ENCODE measurements at regions of chr6 and their contacts with region 1.

Region 1: DNA sequence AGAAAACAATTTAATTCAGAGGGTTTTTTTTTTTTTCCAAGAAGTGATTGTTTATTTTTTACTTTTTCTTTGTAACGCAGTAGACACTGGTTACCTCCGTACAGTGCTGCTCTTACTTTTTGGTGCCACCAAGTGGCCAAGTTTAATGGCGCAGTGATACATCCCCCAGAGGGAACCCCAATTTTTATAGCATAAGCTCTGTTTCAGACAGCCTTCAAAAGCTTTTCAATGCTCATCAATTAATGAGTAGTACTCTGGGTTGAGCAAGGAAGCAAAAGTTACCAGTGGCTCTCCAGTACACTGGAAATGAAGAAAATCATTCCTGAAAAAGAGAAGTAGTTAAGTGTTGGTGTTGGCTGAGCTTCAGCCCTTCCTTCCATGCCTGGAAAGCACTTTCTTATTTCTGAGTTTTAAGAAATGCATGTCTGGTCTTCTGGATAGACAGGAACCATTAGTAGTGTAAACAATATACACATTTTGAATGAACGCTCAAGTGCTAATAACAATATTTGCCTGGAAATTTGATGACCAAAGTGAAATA is 129.1 kb upstream of the SMLR1 start:
- DNase-seq: no peak
- ATAC-seq: peak; percentile 64
- H3K4me3 Mint-ChIP-seq: no peak overlapping the region
- H3K27ac Mint-ChIP-seq: no peak overlapping the region
- H3K4me1 Mint-ChIP-seq: no peaks in the 10 kb centered on the region
- H3K27me3 Mint-ChIP-seq: peaks cover 8% of the 10 kb centered on the region
- CTCF ChIP-seq: no peak

Region 2: DNA sequence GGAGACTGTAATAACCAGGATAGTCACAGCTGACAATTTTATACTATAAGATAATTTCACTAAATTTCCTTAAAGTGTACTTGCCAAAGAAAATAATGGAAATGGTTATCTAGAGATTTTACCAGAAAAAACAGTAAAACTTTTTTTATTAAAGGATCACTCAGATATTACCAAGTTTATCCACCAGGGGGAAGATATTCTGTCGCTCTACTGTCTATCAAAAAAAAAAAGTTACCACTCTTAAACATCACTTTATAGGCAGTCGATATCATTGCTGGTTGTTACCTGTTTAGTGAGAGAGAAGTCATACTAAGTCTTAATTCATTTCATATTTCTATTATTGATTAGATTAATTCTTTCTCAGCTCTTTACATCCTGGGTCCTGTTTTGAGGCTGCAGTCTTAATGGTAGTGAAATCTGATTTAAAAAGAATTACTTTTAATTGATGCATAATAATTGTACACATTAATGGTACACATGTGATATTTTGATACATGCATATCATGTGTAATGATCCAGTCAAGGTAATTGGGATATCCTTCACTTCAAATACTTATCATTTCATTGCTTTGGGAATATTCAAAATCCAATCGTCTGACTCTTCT is 660.8 kb before region 1 on chr6:
- CTCF ChIA-PET with region 1: interaction called, 3 read pairs
- POLR2A ChIA-PET with region 1: no interaction called
- intact Hi-C with region 1: loop called (anchors 2 kb)
- DNase-seq: no peak
- ATAC-seq: peak; percentile 49
- H3K4me3 Mint-ChIP-seq: no peak overlapping the region
- H3K27ac Mint-ChIP-seq: no peak overlapping the region
- H3K4me1 Mint-ChIP-seq: peaks cover 68% of the 10 kb centered on the region
- H3K27me3 Mint-ChIP-seq: no peaks in the 10 kb centered on the region
- CTCF ChIP-seq: no peak

Region 3: GRCh38 chr6:130076512-130076911 is 621.6 kb before region 1 on chr6:
- CTCF ChIA-PET with region 1: no interaction called
- POLR2A ChIA-PET with region 1: no interaction called
- intact Hi-C with region 1: loop called (anchors 1 kb)
- DNase-seq: no peak
- ATAC-seq: no peak
- H3K4me3 Mint-ChIP-seq: no peak overlapping the region
- H3K27ac Mint-ChIP-seq: peak overlapping the region; percentile 38
- H3K4me1 Mint-ChIP-seq: peaks cover 18% of the 10 kb centered on the region
- H3K27me3 Mint-ChIP-seq: no peaks in the 10 kb centered on the region
- CTCF ChIP-seq: no peak

Region 4: DNA sequence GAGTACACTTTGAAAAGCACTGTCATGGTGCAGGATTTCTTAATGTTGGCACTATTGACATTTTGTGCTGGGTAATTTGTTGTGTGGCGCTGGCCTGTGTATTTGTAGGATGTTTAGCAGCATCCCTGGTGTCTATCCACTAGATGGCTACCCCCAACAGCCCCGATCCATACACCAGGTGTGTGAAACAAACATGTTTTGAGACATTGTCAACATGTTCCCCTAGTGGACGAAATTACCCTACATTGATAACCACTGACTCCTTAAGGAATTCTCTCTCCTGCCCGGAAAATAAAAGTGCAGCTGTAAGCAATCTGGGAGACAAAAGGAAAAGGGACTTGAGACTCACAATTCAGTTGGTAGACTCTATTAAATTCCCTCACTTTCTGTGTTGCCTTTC is 384.9 kb before region 1 on chr6:
- CTCF ChIA-PET with region 1: interaction called, 10 read pairs
- POLR2A ChIA-PET with region 1: no interaction called
- intact Hi-C with region 1: no loop called
- DNase-seq: no peak
- ATAC-seq: no peak
- H3K4me3 Mint-ChIP-seq: no peak overlapping the region
- H3K27ac Mint-ChIP-seq: no peak overlapping the region
- H3K4me1 Mint-ChIP-seq: no peaks in the 10 kb centered on the region
- H3K27me3 Mint-ChIP-seq: no peaks in the 10 kb centered on the region
- CTCF ChIP-seq: no peak

Region 5: GRCh38 chr6:130322673-130323268 is 375.3 kb before region 1 on chr6:
- CTCF ChIA-PET with region 1: interaction called, 53 read pairs
- POLR2A ChIA-PET with region 1: interaction called, 3 read pairs
- intact Hi-C with region 1: loop called (anchors 1 kb)
- DNase-seq: no peak
- ATAC-seq: peak; percentile 42
- H3K4me3 Mint-ChIP-seq: no peak overlapping the region
- H3K27ac Mint-ChIP-seq: no peak overlapping the region
- H3K4me1 Mint-ChIP-seq: peaks cover 2% of the 10 kb centered on the region
- H3K27me3 Mint-ChIP-seq: no peaks in the 10 kb centered on the region
- CTCF ChIP-seq: peak; percentile 87

Region 6: GRCh38 chr6:130365166-130366106 is 332.6 kb before region 1 on chr6 and contains the start of gene TMEM200A:
- CTCF ChIA-PET with region 1: interaction called, 14 read pairs
- POLR2A ChIA-PET with region 1: no interaction called
- intact Hi-C with region 1: loop called (anchors 1 kb)
- DNase-seq: peak; percentile 50
- ATAC-seq: peak; percentile 72
- H3K4me3 Mint-ChIP-seq: peak within 1 kb of the TSS; percentile 78
- H3K27ac Mint-ChIP-seq: no peak within 1 kb of the TSS
- H3K4me1 Mint-ChIP-seq: peaks cover 16% of the 10 kb centered on the region
- H3K27me3 Mint-ChIP-seq: peaks cover 36% of the 10 kb centered on the region
- CTCF ChIP-seq: no peak
- total RNA-seq, gene TMEM200A: 0.69 and 1.1 TPM in 2 replicates

Region 7: GRCh38 chr6:130843575-130844320 is 145.7 kb after region 1 on chr6:
- CTCF ChIA-PET with region 1: interaction called, 3 read pairs
- POLR2A ChIA-PET with region 1: no interaction called
- intact Hi-C with region 1: loop called (anchors 10 kb)
- DNase-seq: no peak
- ATAC-seq: peak; percentile 73
- H3K4me3 Mint-ChIP-seq: no peak overlapping the region
- H3K27ac Mint-ChIP-seq: no peak overlapping the region
- H3K4me1 Mint-ChIP-seq: peaks cover 19% of the 10 kb centered on the region
- H3K27me3 Mint-ChIP-seq: no peaks in the 10 kb centered on the region
- CTCF ChIP-seq: peak; percentile 31

Region 8: DNA sequence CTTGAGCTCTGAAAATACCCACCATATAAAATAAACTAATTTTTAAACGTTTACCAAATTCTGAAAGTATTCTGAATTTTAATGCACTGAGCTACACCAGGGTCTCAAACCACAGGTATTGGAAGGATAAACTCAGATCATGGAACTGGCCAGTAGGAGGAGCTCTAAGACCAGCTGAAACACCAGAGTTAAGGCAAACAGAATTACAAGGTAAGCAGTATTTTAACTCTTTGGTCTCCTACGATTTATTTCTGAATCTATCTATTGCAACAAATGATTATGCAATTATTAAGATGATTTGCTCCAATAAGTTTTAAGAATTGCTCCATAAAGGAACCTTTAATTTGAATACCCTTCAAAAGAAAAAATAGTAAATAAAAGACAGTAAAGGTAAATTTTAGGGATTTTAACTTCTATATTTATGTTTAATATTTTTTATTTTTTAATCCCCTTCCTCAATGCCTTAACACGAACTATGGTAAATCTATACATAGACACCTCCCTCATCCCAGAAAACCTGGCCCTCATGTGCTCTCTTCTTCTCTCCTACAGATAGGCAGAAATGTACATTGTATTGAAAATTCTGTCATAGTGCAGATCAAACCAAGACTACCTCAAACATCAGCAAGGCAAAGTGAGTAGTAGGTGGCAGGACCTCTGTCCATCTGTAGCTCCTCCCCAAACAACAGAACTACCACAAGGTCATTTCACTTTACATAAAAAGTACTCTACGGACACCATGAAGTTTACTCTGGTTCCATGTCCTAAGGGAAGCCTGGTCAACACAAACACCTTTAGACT is 187.5 kb after region 1 on chr6:
- CTCF ChIA-PET with region 1: no interaction called
- POLR2A ChIA-PET with region 1: no interaction called
- intact Hi-C with region 1: no loop called
- DNase-seq: no peak
- ATAC-seq: peak; percentile 81
- H3K4me3 Mint-ChIP-seq: no peak overlapping the region
- H3K27ac Mint-ChIP-seq: no peak overlapping the region
- H3K4me1 Mint-ChIP-seq: no peaks in the 10 kb centered on the region
- H3K27me3 Mint-ChIP-seq: no peaks in the 10 kb centered on the region
- CTCF ChIP-seq: peak; percentile 30